ENCODE measurements at regions of chr19 and their contacts with region 1.

Region 1: GRCh38 chr19:21047716-21048115 is 27.3 kb downstream of the ZNF430 start:
- DNase-seq: no peak
- H3K4me3 ChIP-seq: no peak overlapping the region
- H3K27ac ChIP-seq: no peak overlapping the region
- H3K4me1 ChIP-seq: no peaks in the 10 kb centered on the region
- H3K27me3 ChIP-seq: no peaks in the 10 kb centered on the region
- CTCF ChIP-seq: no peak

Region 2: DNA sequence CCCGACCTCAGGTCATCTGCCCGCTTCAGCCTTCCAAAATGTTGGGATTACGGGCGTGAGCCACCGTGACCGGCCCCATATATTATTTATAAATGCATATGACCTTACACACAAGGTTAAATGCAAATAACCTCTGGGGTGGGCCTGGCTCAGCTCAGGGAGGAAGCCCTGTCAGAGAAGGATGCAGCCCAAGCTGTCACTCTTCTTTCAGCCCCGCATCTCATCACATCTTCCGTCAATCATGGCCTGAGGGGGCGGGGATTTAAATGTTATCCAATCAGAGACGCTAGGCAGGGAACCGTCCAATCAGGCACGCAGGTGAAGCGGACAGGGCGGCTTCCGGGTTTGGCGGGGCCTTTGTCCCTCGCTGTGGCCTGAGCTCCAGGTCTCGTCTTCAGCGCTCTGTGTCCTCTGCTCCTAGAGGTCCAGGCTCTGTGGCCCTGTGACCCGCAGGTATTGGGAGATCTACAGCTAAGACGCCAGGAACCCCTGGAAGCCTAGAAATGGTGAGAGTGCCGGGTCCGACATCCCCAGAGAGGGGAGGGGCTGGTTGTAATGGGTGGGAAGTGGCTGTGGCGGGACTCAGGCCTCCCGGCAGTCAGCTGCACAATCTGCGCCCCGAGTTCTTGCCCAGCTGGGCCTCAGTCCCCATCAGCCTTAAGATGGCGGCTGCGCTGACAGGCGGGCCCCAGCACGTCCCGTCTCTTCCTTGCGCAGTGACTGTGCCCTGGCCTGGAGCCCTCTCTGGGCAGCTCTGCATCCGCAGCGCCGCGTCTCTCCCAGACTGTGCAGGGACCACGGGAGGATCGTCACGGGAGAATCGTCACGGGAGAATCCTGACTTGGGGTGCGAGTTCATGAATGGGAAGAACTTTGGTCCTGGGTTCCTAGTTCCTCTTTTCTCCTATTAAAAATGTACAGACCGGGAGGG is 27.2 kb before region 1 on chr19 and contains the start of gene ZNF430:
- CTCF ChIA-PET with region 1: no interaction called
- POLR2A ChIA-PET with region 1: no interaction called
- intact Hi-C with region 1: no loop called
- DNase-seq: peak; percentile 90 to 91
- H3K4me3 ChIP-seq: peak within 1 kb of the TSS; percentile 87
- H3K27ac ChIP-seq: peak within 1 kb of the TSS; percentile 50; the same call in 1 of the 2 replicates
- H3K4me1 ChIP-seq: peaks cover 24% of the 10 kb centered on the region
- H3K27me3 ChIP-seq: no peaks in the 10 kb centered on the region
- CTCF ChIP-seq: no peak
- total RNA-seq, gene ZNF430: 7.4 and 8.2 TPM in 2 replicates

Region 3: GRCh38 chr19:21147540-21147939 is 99.8 kb after region 1 on chr19:
- CTCF ChIA-PET with region 1: no interaction called
- POLR2A ChIA-PET with region 1: no interaction called
- intact Hi-C with region 1: no loop called
- DNase-seq: no peak
- H3K4me3 ChIP-seq: no peak overlapping the region
- H3K27ac ChIP-seq: no peak overlapping the region
- H3K4me1 ChIP-seq: peaks cover 22% of the 10 kb centered on the region
- H3K27me3 ChIP-seq: no peaks in the 10 kb centered on the region
- CTCF ChIP-seq: no peak

Region 4: DNA sequence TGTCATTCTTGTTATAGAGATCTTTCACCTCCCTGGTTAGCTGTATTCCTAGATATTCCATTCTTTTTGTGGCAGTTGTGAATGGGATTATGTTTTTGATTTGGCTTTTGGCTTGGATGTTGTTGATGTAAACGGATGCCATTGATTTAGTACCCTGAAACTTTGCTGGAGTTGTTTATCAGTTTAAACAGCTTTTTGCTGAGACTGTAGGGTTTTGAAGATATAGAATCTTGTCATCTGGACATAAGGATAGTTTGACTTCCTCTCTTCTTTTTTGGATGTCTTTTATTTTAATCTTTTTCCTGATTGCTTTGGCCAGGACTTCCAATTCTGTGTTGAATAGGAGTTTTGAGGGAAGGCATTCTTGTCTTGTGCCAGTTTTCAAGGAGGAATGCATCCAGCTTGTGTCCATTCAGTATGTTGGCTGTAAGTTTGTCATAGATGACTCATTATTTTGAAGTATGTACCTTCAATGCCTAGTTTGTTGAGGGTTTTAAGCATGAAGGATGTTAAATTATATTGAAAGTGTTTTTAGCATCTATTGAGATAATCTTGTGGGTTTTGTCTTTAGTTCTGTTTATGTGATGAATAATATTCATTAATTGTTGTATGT is 110.9 kb after region 1 on chr19:
- CTCF ChIA-PET with region 1: interaction called, 12 read pairs
- POLR2A ChIA-PET with region 1: no interaction called
- intact Hi-C with region 1: no loop called
- DNase-seq: no peak
- H3K4me3 ChIP-seq: no peak overlapping the region
- H3K27ac ChIP-seq: no peak overlapping the region
- H3K4me1 ChIP-seq: no peaks in the 10 kb centered on the region
- H3K27me3 ChIP-seq: no peaks in the 10 kb centered on the region
- CTCF ChIP-seq: no peak

Region 5: GRCh38 chr19:22491746-22492145 is 1444.0 kb after region 1 on chr19:
- CTCF ChIA-PET with region 1: no interaction called
- POLR2A ChIA-PET with region 1: no interaction called
- intact Hi-C with region 1: no loop called
- DNase-seq: no peak
- H3K4me3 ChIP-seq: no peak overlapping the region
- H3K27ac ChIP-seq: no peak overlapping the region
- H3K4me1 ChIP-seq: no peaks in the 10 kb centered on the region
- H3K27me3 ChIP-seq: no peaks in the 10 kb centered on the region
- CTCF ChIP-seq: no peak